A673 (cell line): ENCODE measurements at regions of chr2 and their contacts with region 1.

Region 1: DNA sequence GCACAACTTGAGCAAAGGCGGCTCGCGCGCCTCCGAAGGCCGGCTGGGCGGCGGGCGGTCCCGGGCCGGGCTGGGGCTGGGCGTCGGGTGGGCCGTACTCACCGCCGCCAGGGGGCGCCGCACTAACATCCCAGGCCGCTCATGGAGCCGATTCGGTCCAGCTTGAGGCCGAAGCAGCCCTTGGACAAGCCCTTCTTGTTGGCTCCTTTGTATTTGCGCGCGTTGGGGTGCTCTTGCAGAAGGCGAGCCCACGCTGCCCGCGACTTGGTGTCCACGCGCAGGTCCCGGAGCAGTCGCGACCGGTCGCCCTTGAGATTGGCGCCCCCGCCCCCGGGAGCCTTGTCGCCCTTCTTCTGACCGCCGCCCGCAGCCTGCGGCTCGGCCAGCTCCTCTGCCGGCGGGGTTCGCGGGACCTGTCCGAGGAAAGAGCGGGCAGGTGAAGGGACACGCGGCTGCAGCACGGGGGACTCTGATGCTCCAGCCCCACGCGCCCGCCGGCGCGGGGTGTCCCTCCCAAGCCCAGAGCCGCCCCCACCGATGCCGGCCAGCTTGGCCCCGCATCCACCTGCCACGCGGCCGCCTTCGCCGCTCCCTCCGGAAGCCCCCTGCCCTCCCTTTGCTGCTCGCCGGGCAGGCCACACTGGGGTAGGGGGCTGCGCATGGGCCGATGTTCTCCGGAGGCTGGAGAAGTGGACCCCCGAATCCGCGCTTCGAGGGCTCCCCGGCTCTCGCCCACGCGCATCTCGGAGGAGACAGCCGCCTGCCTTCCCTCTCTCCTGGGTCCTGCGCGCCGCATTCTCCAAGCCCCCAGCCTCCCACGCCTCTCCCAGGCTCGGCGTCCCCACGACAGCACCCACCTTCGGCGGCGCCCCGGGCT is 655 bp downstream of the NPPC start:
- DNase-seq: peak; percentile 79
- H3K4me3 ChIP-seq: peak overlapping the region; percentile 46
- H3K27ac ChIP-seq: no peak overlapping the region
- H3K4me1 ChIP-seq: peaks cover 14% of the 10 kb centered on the region
- H3K27me3 ChIP-seq: peaks cover 40% of the 10 kb centered on the region
- CTCF ChIP-seq: peak; percentile 74

Region 2: DNA sequence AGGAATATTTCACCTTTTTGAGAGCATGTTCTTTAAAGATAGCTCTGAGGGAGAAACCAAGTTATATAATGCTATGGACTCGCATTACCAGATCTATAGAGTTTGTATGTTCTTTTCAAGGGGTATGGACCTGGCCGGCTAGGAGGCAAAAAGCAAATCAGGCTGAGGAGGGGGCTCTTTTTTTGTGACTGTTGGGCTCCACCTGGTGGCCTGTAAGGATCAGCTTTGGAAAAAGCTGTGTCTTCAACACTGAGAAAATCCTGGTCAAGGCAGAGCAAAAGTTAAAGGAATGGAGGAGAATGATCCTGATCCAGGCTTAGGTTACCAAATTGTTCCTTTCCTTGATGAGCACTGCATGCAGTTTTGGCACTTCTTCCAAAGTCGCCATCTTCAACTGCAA is 216.5 kb after region 1 on chr2:
- CTCF ChIA-PET with region 1: interaction called, 6 read pairs
- POLR2A ChIA-PET with region 1: no interaction called
- intact Hi-C with region 1: loop called (anchors 1 kb)
- DNase-seq: peak; percentile 51
- H3K4me3 ChIP-seq: no peak overlapping the region
- H3K27ac ChIP-seq: no peak overlapping the region
- H3K4me1 ChIP-seq: no peaks in the 10 kb centered on the region
- H3K27me3 ChIP-seq: no peaks in the 10 kb centered on the region
- CTCF ChIP-seq: peak; percentile 77

Region 3: DNA sequence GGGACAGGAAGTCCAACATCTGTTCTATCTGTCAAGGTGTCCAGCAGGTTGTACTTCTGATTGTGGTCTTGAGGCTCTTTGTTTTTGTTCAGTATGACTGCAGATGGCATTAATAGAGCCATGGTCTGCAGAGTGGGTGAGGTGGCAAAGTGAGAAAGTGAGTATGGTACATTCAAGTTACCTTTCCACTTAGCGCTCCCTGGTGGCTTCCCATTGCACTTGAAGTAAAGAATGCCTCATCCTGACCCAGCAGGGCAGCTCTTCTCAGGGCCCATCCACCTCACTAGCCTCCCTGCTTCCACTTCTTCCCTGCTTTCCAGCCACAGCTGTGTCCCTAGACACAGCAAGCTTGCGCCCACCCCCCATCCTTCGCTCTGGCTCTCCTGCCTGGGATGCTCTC is 305.0 kb after region 1 on chr2:
- CTCF ChIA-PET with region 1: no interaction called
- POLR2A ChIA-PET with region 1: no interaction called
- intact Hi-C with region 1: loop called (anchors 5 kb)
- DNase-seq: peak; percentile 29
- H3K4me3 ChIP-seq: no peak overlapping the region
- H3K27ac ChIP-seq: no peak overlapping the region
- H3K4me1 ChIP-seq: no peaks in the 10 kb centered on the region
- H3K27me3 ChIP-seq: no peaks in the 10 kb centered on the region
- CTCF ChIP-seq: peak; percentile 45

Region 4: DNA sequence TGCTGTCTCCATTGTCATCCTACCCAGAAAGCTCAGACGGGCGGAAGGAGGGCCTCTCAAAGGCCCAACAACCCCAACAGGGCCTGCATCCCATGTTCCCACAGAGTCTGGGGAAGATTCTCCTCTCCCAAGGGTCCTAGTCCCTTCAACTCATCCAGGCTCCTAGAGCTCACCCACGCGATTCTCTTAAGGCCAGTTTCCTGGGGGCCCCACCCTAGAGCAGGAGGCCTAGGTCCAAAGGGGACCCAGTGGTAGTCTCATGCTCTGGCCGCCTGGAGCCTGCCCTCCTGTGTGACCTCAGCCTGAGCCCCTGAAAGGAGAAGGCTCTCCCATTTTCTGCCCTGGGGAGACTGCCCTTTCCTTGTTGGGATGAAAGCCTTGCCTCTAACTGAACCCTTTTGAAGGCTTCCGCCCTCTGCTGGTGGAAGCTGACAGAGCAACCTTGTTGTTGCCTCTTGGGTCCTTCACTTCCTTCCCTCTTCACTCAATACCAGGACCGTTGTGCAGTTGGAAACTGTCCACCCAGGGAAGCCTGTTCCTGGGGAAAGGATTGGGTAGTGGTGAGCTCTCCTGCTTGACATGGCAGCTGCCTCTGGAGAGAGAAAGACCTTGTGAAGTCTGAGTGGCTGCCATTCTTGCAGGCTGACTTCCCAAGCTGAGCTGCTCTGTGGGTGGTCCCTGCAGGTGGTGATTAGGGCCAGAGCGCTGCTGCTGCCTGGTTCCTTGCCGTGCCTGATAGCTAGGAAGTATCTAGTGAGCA is 367.0 kb after region 1 on chr2:
- CTCF ChIA-PET with region 1: interaction called, 11 read pairs
- POLR2A ChIA-PET with region 1: no interaction called
- intact Hi-C with region 1: loop called (anchors 10 kb)
- DNase-seq: peak; percentile 84
- H3K4me3 ChIP-seq: no peak overlapping the region
- H3K27ac ChIP-seq: no peak overlapping the region
- H3K4me1 ChIP-seq: peaks cover 7% of the 10 kb centered on the region
- H3K27me3 ChIP-seq: no peaks in the 10 kb centered on the region
- CTCF ChIP-seq: peak; percentile 92

Region 5: DNA sequence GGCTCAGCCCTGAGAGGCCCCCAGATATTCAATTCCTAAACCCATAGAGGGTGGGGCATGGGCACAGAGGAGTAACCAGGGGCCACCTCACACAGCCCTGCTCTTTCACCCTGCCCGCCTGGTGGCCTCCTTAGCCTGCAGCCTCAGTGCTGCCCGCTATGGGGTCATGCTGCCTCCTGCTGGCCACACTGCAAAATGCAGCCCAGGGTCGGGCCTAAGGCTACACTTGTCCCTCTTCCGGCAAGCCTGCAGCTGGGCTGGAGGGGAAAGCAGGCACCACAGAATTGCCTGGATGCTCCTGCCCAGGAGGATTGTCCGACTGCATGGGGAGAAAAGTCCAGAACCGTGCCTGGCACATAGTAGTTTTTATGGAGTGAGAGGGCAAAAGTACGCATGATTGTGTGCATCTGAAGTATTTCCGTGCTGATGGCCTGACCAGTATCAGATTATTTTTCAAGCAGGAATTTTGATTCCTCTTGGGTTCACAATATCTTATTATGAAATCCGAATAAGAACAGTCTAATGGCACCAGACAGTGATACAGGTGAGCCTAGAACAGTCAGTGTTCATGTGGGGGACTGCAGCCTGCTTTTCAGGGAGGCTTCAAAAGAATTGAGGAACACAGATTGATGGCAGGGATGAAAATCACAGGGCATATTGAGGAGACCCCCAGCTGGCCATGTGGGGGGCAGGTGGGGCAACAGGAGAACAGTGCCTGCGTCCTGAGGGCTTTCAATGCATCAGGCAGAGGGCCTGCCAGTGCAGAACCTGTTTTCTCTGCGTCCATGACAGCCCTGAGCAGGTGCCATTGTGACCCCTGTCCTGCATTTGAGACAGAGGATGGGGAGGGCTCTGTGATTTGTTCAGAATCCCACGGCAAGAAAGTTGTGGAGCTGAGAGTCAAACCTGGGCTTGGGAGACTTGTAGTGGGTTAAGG is 401.8 kb after region 1 on chr2:
- CTCF ChIA-PET with region 1: no interaction called
- POLR2A ChIA-PET with region 1: no interaction called
- intact Hi-C with region 1: loop called (anchors 1 kb)
- DNase-seq: peak; percentile 66
- H3K4me3 ChIP-seq: no peak overlapping the region
- H3K27ac ChIP-seq: no peak overlapping the region
- H3K4me1 ChIP-seq: no peaks in the 10 kb centered on the region
- H3K27me3 ChIP-seq: no peaks in the 10 kb centered on the region
- CTCF ChIP-seq: peak; percentile 76